Left ventricle myocardium inferior (tissue), 1 donor: ENCODE measurements at regions of chr2 and their contacts with region 1.

Region 1: GRCh38 chr2:151649966-151650365 is 84.3 kb downstream of the NEB start:
- DNase-seq: no peak
- H3K4me3 ChIP-seq: no peak overlapping the region
- H3K27ac ChIP-seq: no peak overlapping the region
- H3K4me1 ChIP-seq: no peaks in the 10 kb centered on the region
- H3K27me3 ChIP-seq: no peaks in the 10 kb centered on the region
- CTCF ChIP-seq: no peak

Region 2: DNA sequence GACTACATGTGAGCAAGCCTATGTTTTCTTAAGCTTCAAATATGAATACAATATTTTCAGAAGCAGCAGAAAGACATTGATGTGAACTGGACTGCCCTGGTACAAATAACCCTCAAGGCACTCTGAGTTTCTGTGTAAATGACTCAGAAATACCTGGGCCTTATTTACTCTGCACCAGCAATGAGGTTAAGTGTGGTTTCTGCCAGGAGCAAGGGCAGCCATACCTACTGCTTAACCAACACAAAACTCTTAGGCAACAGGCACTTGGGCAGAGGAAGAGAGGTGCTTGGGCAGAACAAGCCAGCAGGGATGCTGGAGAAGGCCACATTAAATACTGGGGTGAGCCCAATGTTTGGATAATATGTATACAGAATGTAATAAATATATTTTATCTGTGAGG is 207.7 kb after region 1 on chr2:
- intact Hi-C with region 1: loop called (anchors 5 kb)
- DNase-seq: no peak
- H3K4me3 ChIP-seq: no peak overlapping the region
- H3K27ac ChIP-seq: no peak overlapping the region
- H3K4me1 ChIP-seq: peaks cover 7% of the 10 kb centered on the region
- H3K27me3 ChIP-seq: no peaks in the 10 kb centered on the region
- CTCF ChIP-seq: no peak